ENCODE measurements at regions of chr3 and their contacts with region 1.

Region 1: GRCh38 chr3:17645072-17645698 is 97.2 kb downstream of the TBC1D5 start:
- DNase-seq: peak in 1 of 3 donors; percentile 73
- ATAC-seq: peak; percentile 82
- H3K4me3 ChIP-seq: no peak overlapping the region
- H3K4me1 ChIP-seq: no peaks in the 10 kb centered on the region
- CTCF ChIP-seq: no peak

Region 2: GRCh38 chr3:17742108-17742879 is 97.1 kb after region 1 on chr3 and contains the start of gene TBC1D5:
- intact Hi-C with region 1: loop called in 1 of 2 experiments (anchors 10 kb)
- DNase-seq: peak; percentile 95 to 98 (median 98)
- ATAC-seq: peak; percentile 90
- H3K4me3 ChIP-seq: peak within 1 kb of the TSS; percentile 48
- H3K4me1 ChIP-seq: peaks cover 28% of the 10 kb centered on the region
- CTCF ChIP-seq: no peak
- total RNA-seq, gene TBC1D5: 33.1 to 56.1 (median 44.1) TPM

Region 3: DNA sequence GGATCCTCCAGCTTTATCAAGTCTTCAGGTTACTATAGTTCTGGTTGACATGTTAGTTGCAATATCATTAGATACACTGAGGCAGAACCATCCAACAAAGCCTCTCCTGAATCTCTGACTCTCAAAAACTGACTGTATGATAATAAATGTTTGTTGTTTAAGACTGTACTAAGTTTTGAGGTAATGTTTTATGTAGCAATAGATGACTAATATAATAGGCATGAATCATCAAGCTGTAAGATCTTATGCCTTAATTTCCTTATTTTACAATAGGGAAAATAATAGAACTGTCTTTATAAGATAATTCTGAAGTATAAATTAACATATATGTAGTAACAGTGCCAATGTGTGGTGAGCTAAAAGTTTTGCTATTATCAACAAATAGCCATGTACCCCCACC is 186.2 kb after region 1 on chr3:
- intact Hi-C with region 1: loop called in 1 of 2 experiments (anchors 10 kb)
- DNase-seq: no peak
- ATAC-seq: no peak
- H3K4me3 ChIP-seq: no peak overlapping the region
- H3K4me1 ChIP-seq: no peaks in the 10 kb centered on the region
- CTCF ChIP-seq: no peak